ENCODE measurements at regions of chr18 and their contacts with region 1.

Region 1: DNA sequence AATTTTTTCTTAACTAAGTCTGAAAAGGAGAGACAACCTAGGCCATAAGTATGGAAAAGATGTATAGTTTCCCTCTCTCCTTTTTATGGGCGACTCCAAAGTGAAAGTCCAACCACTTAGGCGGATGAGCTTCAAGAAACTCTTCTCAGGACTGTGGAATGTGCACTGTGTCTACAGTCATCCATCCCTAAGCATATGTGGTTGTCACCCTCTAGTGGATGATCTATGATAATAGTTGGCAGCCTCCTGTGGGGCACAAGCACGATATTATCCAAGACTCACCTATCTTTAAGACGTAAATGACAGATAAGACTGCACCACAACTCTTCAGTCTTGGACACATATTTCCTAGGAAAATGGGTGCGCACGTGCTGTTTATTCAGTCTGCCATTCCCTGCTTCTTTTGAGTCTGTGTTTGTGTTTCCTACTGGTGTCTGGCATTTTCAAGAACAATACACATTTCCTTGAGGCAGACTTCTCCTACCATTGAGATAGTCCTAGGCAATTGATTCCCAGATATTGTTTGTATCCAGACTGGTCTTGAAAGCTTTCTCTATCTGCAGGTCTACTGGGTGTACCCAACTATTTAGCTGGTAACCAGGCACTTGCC is 145.5 kb upstream of the CTAGE1 start:
- DNase-seq: peak in 2 of 5 donors; percentile 50 to 64
- ATAC-seq: peak; percentile 72 to 80 (median 76)
- H3K4me3 ChIP-seq: peak overlapping the region; percentile 10 to 65 (median 54)
- H3K27ac ChIP-seq: peak overlapping the region; percentile 91 to 99 (median 98)
- H3K4me1 ChIP-seq: peaks cover 0 to 24% (median 7%) of the 10 kb centered on the region in 12 donors
- H3K27me3 ChIP-seq: peaks cover 0 to 28% (median 0%) of the 10 kb centered on the region in 9 donors
- CTCF ChIP-seq: peak; percentile 60 to 85 (median 82)
- POLR2A ChIP-seq: peak in 1 of 2 donors; percentile 34

Region 2: GRCh38 chr18:21914739-21915319 is 648.4 kb before region 1 on chr18:
- intact Hi-C with region 1: loop called (anchors 2 to 10 kb)
- DNase-seq: peak in 2 of 5 donors; percentile 18 to 22
- ATAC-seq: peak in 3 of 4 donors; percentile 70 to 83 (median 76)
- H3K4me3 ChIP-seq: no peak overlapping the region
- H3K27ac ChIP-seq: no peak overlapping the region
- H3K4me1 ChIP-seq: no peaks in the 10 kb centered on the region
- H3K27me3 ChIP-seq: no peaks in the 10 kb centered on the region
- CTCF ChIP-seq: peak in 11 of 12 donors; percentile 25 to 63 (median 44)
- POLR2A ChIP-seq: no peak

Region 3: GRCh38 chr18:22174341-22175145 is 388.7 kb before region 1 on chr18:
- intact Hi-C with region 1: loop called in 9 of 10 experiments (anchors 1 to 5 kb)
- DNase-seq: peak in 1 of 5 donors; percentile 49
- ATAC-seq: peak; percentile 23 to 58 (median 38)
- H3K4me3 ChIP-seq: peak overlapping the region; percentile 51 to 97 (median 84)
- H3K27ac ChIP-seq: peak overlapping the region; percentile 77 to 100 (median 97)
- H3K4me1 ChIP-seq: peaks cover 0 to 14% (median 4%) of the 10 kb centered on the region in 12 donors
- H3K27me3 ChIP-seq: peaks cover 0 to 54% (median 0%) of the 10 kb centered on the region in 9 donors
- CTCF ChIP-seq: peak in 2 of 12 donors; percentile 12 to 18
- POLR2A ChIP-seq: no peak

Region 4: DNA sequence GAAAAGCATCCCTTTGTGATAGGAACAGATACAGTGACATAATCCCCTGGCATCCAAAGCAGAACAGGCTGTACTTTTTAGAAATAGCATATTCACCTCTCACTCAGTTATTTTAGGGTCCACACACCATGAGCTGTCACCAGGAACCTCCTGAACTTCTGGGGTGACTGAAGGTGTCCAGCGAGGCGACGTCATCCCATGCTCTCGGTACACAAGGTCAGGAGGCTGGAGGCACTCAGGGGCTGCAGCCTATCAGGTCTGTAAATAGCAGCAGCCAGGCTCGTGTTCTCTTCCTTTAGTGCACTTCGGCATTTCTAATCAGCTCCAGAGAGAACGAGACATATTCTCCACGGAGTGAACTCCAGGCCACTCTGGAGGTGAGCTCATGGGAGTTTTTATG is 295.5 kb before region 1 on chr18:
- intact Hi-C with region 1: loop called in 8 of 10 experiments (anchors 5 kb)
- DNase-seq: peak; percentile 78 to 95 (median 86)
- ATAC-seq: peak; percentile 92 to 96 (median 92)
- H3K4me3 ChIP-seq: peak overlapping the region in 9 of 12 donors; percentile 34 to 61 (median 50)
- H3K27ac ChIP-seq: peak overlapping the region; percentile 77 to 99 (median 92)
- H3K4me1 ChIP-seq: peaks cover 0 to 33% (median 7%) of the 10 kb centered on the region in 12 donors
- H3K27me3 ChIP-seq: no peaks in the 10 kb centered on the region
- CTCF ChIP-seq: no peak
- POLR2A ChIP-seq: peak in 1 of 2 donors; percentile 31

Region 5: DNA sequence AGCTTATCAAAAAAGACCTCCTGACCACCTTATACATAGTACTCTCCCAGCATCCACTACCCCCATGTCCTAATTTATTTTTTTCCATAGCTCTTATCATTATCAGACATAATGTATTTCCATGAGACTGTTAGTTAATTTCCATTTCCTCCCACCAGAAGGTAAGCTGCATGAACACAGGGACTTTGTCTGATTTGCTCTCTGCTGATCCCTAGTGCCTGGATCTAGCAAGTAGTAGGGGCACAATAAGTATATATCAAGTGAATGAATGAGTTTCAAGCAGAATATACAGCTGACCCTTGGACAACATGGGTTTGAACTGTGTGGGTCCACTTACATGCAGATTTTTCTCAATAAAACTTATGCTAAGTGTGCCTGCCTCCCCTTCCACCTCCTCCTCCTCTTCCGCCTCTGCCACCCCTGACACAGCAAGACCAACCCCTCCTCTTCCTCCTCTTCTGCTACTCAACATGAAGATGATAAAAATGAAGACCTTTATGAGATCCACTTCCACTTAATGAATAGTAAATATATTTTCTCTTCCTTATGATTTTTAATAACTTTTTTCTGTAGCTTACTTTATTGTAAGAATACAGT is 199.2 kb before region 1 on chr18:
- intact Hi-C with region 1: loop called in 1 of 10 experiments (anchors 1 kb)
- DNase-seq: no peak
- ATAC-seq: peak; percentile 47 to 80 (median 73)
- H3K4me3 ChIP-seq: no peak overlapping the region
- H3K27ac ChIP-seq: no peak overlapping the region
- H3K4me1 ChIP-seq: peaks cover 0 to 9% (median 0%) of the 10 kb centered on the region in 12 donors
- H3K27me3 ChIP-seq: no peaks in the 10 kb centered on the region
- CTCF ChIP-seq: peak in 11 of 12 donors; percentile 12 to 59 (median 47)
- POLR2A ChIP-seq: no peak

Region 6: GRCh38 chr18:22408059-22408458 is 155.1 kb before region 1 on chr18:
- intact Hi-C with region 1: loop called in 1 of 10 experiments (anchors 10 kb)
- DNase-seq: no peak
- ATAC-seq: no peak
- H3K4me3 ChIP-seq: no peak overlapping the region
- H3K27ac ChIP-seq: no peak overlapping the region
- H3K4me1 ChIP-seq: peaks cover 0 to 7% (median 0%) of the 10 kb centered on the region in 12 donors
- H3K27me3 ChIP-seq: no peaks in the 10 kb centered on the region
- CTCF ChIP-seq: peak in 2 of 12 donors; percentile 4 to 5
- POLR2A ChIP-seq: no peak

Region 7: GRCh38 chr18:22632191-22632590 is 69.0 kb after region 1 on chr18:
- intact Hi-C with region 1: no loop called
- DNase-seq: no peak
- ATAC-seq: no peak
- H3K4me3 ChIP-seq: no peak overlapping the region
- H3K27ac ChIP-seq: no peak overlapping the region
- H3K4me1 ChIP-seq: no peaks in the 10 kb centered on the region
- H3K27me3 ChIP-seq: no peaks in the 10 kb centered on the region
- CTCF ChIP-seq: no peak
- POLR2A ChIP-seq: no peak

Region 8: GRCh38 chr18:22710628-22711380 is 147.6 kb after region 1 on chr18:
- intact Hi-C with region 1: loop called in 2 of 10 experiments (anchors 5 to 10 kb)
- DNase-seq: peak in 4 of 5 donors; percentile 36 to 61 (median 44)
- ATAC-seq: peak in 3 of 4 donors; percentile 76 to 83 (median 78)
- H3K4me3 ChIP-seq: peak overlapping the region in 10 of 12 donors; percentile 31 to 69 (median 47)
- H3K27ac ChIP-seq: peak overlapping the region in 10 of 12 donors; percentile 13 to 74 (median 50)
- H3K4me1 ChIP-seq: peaks cover 0 to 35% (median 15%) of the 10 kb centered on the region in 12 donors
- H3K27me3 ChIP-seq: no peaks in the 10 kb centered on the region
- CTCF ChIP-seq: no peak
- POLR2A ChIP-seq: no peak